Adrenal gland (tissue), 19 donors: ENCODE measurements at regions of chr1 and their contacts with region 1.

Region 1: GRCh38 chr1:5119496-5120234 is 465.3 kb downstream of the AJAP1 start:
- DNase-seq: peak; percentile 15 to 65 (median 42)
- H3K4me3 ChIP-seq: no peak overlapping the region
- H3K27ac ChIP-seq: no peak overlapping the region
- H3K4me1 ChIP-seq: no peaks in the 10 kb centered on the region
- H3K27me3 ChIP-seq: no peaks in the 10 kb centered on the region
- CTCF ChIP-seq: peak; percentile 16 to 54 (median 50)
- POLR2A ChIP-seq: no peak

Region 2: DNA sequence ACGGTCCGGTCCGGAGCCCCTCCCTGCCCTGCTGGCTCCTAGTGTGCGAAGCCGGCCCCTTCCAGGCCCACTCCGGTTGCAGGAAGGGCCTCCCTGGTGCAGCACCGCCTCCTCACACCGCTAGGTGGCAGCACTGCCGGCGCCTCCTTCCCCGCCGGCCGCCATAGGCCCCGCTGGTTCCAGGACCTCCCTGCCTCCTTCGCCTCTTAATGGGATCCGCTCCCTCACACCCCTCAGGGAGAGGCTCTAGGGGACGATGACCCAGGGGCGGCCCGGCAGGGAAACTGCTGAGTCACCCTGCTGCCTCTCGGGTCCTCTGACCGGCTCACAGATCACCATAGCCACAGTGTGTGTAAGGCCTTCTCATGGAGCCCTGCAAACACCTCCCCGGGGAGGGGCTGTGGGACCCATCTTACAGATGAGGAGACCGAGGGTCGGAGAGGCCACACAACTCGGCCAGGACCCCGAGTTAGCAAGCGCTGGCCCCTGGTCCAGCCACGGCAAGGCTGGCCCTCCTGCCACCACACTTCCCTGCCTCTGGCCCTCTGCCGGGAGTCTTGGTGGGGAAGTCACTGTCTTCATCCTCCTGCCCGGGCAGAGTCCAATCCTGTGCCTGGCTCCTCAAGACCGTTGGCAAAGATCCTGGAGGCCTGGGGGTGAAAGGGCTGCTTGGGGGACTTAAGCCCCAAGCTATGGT is 466.9 kb before region 1 on chr1:
- intact Hi-C with region 1: loop called in 1 of 2 experiments (anchors 10 kb)
- DNase-seq: peak; percentile 26 to 62 (median 51)
- H3K4me3 ChIP-seq: no peak overlapping the region
- H3K27ac ChIP-seq: no peak overlapping the region
- H3K4me1 ChIP-seq: no peaks in the 10 kb centered on the region
- H3K27me3 ChIP-seq: peaks cover 26% of the 10 kb centered on the region
- CTCF ChIP-seq: peak; percentile 59 to 96 (median 77)
- POLR2A ChIP-seq: no peak

Region 3: GRCh38 chr1:4778056-4778455 is 341.6 kb before region 1 on chr1:
- intact Hi-C with region 1: loop called in 1 of 2 experiments (anchors 10 kb)
- DNase-seq: peak in 6 of 7 donors; percentile 12 to 53 (median 24)
- H3K4me3 ChIP-seq: no peak overlapping the region
- H3K27ac ChIP-seq: no peak overlapping the region
- H3K4me1 ChIP-seq: no peaks in the 10 kb centered on the region
- H3K27me3 ChIP-seq: no peaks in the 10 kb centered on the region
- CTCF ChIP-seq: peak in 5 of 6 experiments; percentile 11 to 46 (median 40)
- POLR2A ChIP-seq: no peak

Region 4: DNA sequence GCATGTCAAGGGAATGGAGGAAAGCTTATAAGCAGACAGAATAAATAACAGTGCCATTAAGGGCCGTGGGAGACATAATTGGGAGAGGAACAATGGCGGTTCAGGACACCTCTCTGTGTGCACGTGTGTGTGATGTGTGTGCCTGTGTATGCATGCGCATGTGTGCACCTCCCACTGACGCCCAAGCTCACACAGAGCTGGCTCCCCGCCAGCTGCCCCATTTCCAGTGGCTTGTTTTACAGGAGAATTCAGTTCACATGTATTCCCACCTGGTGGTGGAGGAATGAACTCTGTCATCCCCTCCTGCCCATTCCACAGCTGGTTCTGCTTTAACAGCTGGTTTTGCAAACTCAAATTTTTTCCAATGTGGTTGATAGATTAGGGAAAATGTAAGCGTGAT is 203.1 kb before region 1 on chr1:
- intact Hi-C with region 1: no loop called
- DNase-seq: no peak
- H3K4me3 ChIP-seq: no peak overlapping the region
- H3K27ac ChIP-seq: no peak overlapping the region
- H3K4me1 ChIP-seq: no peaks in the 10 kb centered on the region
- H3K27me3 ChIP-seq: no peaks in the 10 kb centered on the region
- CTCF ChIP-seq: no peak
- POLR2A ChIP-seq: no peak

Region 5: DNA sequence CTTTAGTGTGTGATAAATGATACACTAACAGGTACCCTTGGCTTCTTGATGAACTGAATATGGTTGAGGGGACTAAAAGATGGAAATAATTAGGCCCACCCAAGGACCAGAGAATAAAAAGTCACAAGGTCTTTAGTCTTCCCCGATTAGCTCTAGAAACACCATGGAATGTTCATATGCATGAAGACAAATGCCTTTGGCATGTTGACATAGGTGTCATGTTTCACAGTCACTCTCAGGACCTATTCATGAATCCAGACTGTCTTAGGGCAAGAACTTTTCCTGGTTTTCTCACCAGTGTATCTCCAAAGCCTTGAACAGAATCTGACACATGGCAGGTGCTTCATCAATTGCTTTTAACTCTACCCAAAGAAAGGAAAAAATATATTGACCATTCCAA is 52.4 kb before region 1 on chr1:
- intact Hi-C with region 1: no loop called
- DNase-seq: no peak
- H3K4me3 ChIP-seq: no peak overlapping the region
- H3K27ac ChIP-seq: no peak overlapping the region
- H3K4me1 ChIP-seq: no peaks in the 10 kb centered on the region
- H3K27me3 ChIP-seq: no peaks in the 10 kb centered on the region
- CTCF ChIP-seq: no peak
- POLR2A ChIP-seq: no peak